AG04449 (cell line): ENCODE measurements at regions of chr1 and their contacts with region 1.

Region 1: DNA sequence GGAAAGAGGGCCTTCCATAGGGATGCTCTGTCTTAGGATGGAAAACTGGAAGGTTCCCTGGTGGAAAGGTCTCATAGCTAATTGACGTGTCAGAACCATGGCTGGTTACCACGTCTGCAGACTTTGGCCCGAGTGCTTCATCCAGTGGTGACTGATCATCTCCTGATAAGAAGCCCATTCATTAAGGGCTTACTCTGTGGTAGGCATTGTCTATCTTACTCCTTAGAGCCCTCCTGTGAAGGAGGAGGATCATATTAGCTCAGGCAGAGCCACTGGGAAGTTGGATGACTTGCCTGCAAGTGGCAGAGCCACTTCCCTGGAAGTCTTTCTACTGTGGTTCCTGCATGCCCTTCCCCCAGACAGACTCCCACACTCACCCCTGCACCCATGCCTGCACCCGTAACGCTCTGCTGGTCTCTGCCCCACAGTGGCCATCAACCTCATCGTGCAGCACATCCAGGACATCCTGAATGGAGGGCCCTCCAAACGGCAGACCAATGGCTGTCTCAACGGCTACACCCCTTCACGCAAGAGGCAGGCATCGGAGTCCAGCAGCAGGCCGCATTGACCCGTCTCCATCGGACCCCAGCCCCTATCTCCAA is 79.9 kb downstream of the UCK2 start:
- DNase-seq: no peak
- H3K4me3 ChIP-seq: no peak overlapping the region
- CTCF ChIP-seq: no peak

Region 2: GRCh38 chr1:165717918-165718515 is 189.3 kb before region 1 on chr1:
- CTCF ChIA-PET with region 1: interaction called, 71 read pairs
- POLR2A ChIA-PET with region 1: no interaction called
- DNase-seq: peak; percentile 29
- H3K4me3 ChIP-seq: no peak overlapping the region
- CTCF ChIP-seq: peak; percentile 77